ENCODE measurements at regions of chr6 and their contacts with region 1.

Region 1: DNA sequence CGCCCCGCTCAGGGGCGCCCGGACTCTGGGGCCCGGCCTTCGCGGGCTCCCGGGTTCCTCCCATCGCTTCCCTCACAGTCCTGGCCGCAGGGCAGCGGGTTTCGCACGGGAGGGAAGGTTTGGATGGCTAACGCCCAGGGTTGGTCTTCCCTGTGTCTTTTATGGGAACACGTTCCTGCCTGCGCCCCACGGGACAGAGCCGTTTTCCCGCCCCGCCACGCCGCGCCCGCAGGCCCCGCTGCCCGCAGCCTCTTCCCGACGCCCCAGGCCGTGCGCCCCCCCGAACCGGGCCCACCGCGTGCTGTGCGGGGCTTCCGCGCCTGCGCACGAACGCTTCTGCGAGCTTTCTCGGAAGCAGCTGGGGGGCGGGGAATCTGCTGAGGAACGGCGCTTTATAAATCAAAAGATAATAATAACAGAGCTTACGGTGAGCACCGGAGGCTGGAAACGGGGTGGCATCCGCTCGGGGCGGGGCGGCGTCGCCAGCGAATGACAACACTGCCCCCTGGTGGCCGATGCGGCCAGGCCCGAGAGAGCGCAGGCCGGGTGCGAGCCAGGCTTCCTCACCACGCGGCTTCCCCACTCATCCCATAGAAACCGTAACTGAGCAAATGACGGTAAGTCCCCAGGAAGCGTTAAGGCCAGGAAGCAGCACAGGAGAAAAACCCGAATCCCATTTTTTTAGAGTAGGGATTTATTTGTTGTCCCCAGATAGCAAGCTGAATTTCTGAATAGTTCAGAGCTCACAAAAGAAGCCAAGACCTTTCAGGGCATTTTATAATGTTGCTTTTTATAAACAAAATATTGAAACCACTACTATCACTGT is 116.4 kb downstream of the MYLK4 start:
- DNase-seq: peak; percentile 96
- ATAC-seq: peak; percentile 95

Region 2: GRCh38 chr6:1596088-1596852 is 1038.1 kb before region 1 on chr6:
- intact Hi-C with region 1: loop called (anchors 1 kb)
- DNase-seq: peak; percentile 85
- ATAC-seq: peak; percentile 81

Region 3: GRCh38 chr6:2196079-2196679 is 438.2 kb before region 1 on chr6:
- intact Hi-C with region 1: loop called (anchors 5 kb)
- DNase-seq: no peak
- ATAC-seq: peak; percentile 50

Region 4: GRCh38 chr6:2448820-2449571 is 185.4 kb before region 1 on chr6:
- intact Hi-C with region 1: loop called (anchors 2 kb)
- DNase-seq: no peak
- ATAC-seq: no peak

Region 5: GRCh38 chr6:2599817-2600216 is 34.5 kb before region 1 on chr6:
- intact Hi-C with region 1: loop called (anchors 1 kb)
- DNase-seq: no peak
- ATAC-seq: peak; percentile 26

Measured in Right ventricle myocardium inferior (tissue), 1 donor.